Endothelial cell of umbilical vein (primary cell): ENCODE measurements at regions of chr3 and their contacts with region 1.

Region 1: GRCh38 chr3:48285132-48285531 is 44.2 kb downstream of the ZNF589 start:
- DNase-seq: no peak
- H3K4me3 ChIP-seq: no peak overlapping the region
- H3K27ac ChIP-seq: no peak overlapping the region
- H3K4me1 ChIP-seq: no peaks in the 10 kb centered on the region
- H3K27me3 ChIP-seq: no peaks in the 10 kb centered on the region
- CTCF ChIP-seq: no peak
- POLR2A ChIP-seq: no peak

Region 2: DNA sequence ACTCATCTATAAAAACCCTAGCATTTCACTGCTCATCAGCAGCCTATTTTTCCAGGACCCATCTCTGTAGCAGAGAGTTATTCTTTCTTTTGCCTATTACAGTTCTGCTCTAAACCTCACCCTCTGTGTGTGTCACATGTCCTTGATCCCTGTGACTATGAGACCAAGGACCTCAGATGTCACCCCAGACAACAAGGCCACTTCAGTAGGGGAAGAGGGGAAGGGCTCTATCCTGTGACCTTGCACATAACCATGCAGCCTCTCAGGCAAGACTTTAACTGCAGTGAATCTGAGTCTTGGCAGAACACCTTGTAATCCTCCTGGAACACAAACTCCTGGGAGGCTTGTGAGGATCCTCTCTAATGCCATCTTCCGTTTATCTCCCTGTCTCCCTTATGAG is 48.6 kb before region 1 on chr3:
- CTCF ChIA-PET with region 1: no interaction called
- POLR2A ChIA-PET with region 1: no interaction called
- dilution Hi-C with region 1: no loop called
- intact Hi-C with region 1: no loop called
- DNase-seq: no peak
- H3K4me3 ChIP-seq: no peak overlapping the region
- H3K27ac ChIP-seq: no peak overlapping the region
- H3K4me1 ChIP-seq: peaks cover 3% of the 10 kb centered on the region
- H3K27me3 ChIP-seq: no peaks in the 10 kb centered on the region
- CTCF ChIP-seq: no peak
- POLR2A ChIP-seq: no peak

Region 3: DNA sequence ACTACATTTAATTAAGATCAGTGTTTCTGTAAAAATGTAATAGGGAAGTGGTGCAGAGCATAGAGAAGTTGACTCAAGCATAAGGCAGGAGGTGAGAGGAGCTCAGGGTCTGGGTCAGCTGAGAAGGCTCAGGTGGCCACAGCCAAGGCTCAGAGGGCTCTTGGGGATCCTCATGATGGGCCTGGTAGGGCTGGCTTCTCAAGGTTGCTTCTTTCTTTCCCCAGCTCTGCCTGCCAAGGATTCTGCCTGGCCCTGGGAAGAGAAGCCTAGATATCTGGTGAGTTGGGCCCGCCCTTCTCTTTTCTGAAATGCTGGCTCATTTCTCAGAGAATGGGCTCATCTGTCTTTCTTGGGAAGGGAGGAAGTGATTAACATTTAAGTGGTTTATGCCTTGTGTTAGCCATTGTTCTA is 37.7 kb before region 1 on chr3:
- CTCF ChIA-PET with region 1: no interaction called
- POLR2A ChIA-PET with region 1: interaction called, 15 read pairs
- dilution Hi-C with region 1: no loop called
- intact Hi-C with region 1: no loop called
- DNase-seq: peak; percentile 74
- H3K4me3 ChIP-seq: no peak overlapping the region
- H3K27ac ChIP-seq: peak overlapping the region; percentile 92
- H3K4me1 ChIP-seq: peaks cover 22% of the 10 kb centered on the region
- H3K27me3 ChIP-seq: no peaks in the 10 kb centered on the region
- CTCF ChIP-seq: no peak
- POLR2A ChIP-seq: no peak

Region 4: DNA sequence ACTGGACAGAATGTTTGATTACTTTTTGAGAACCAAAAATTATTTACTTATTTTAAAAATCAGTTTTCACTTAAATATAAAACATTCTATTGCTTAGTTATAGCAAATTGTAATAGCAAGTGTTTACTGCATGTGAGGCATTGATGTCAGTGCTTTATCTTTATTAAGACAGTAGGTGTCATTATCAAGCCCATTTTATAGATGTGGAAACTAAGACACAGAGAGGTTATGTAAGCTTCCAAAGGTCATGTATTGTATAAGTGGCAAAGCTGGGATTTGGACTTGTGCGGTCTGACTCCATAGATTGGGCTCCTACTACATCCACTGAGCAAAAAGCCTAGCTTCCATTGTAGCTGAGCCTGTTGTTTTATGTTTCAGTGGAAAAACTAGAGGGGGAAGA is 26.6 kb before region 1 on chr3:
- CTCF ChIA-PET with region 1: no interaction called
- POLR2A ChIA-PET with region 1: no interaction called
- dilution Hi-C with region 1: no loop called
- intact Hi-C with region 1: no loop called
- DNase-seq: no peak
- H3K4me3 ChIP-seq: no peak overlapping the region
- H3K27ac ChIP-seq: no peak overlapping the region
- H3K4me1 ChIP-seq: no peaks in the 10 kb centered on the region
- H3K27me3 ChIP-seq: no peaks in the 10 kb centered on the region
- CTCF ChIP-seq: no peak
- POLR2A ChIP-seq: no peak

Region 5: GRCh38 chr3:49133226-49133951 is 848.3 kb after region 1 on chr3:
- CTCF ChIA-PET with region 1: no interaction called
- POLR2A ChIA-PET with region 1: no interaction called
- dilution Hi-C with region 1: no loop called
- intact Hi-C with region 1: no loop called
- DNase-seq: peak; percentile 92
- H3K4me3 ChIP-seq: peak overlapping the region; percentile 58 to 89 (median 83)
- H3K27ac ChIP-seq: peak overlapping the region; percentile 58
- H3K4me1 ChIP-seq: peaks cover 14% of the 10 kb centered on the region
- H3K27me3 ChIP-seq: no peaks in the 10 kb centered on the region
- CTCF ChIP-seq: no peak
- POLR2A ChIP-seq: peak; percentile 76